ENCODE measurements at regions of chr14 and their contacts with region 1.

Region 1: GRCh38 chr14:104826189-104826860 is 25.4 kb downstream of the ZBTB42 start:
- DNase-seq: peak in 1 of 2 experiments; percentile 100
- H3K4me3 ChIP-seq: peak overlapping the region; percentile 45 to 83 (median 76)
- H3K27ac ChIP-seq: no peak overlapping the region
- H3K4me1 ChIP-seq: peaks cover 0 to 7% (median 5%) of the 10 kb centered on the region in 4 experiments; a peak in 4 of 7 replicates
- H3K27me3 ChIP-seq: peaks cover 0 to 26% (median 19%) of the 10 kb centered on the region in 4 experiments; a peak in 6 of 7 replicates
- CTCF ChIP-seq: peak; percentile 37 to 78 (median 74)
- EP300 ChIP-seq: no peak
- POLR2A ChIP-seq: no peak
- RAD21 ChIP-seq: peak; percentile 53 to 66

Region 2: DNA sequence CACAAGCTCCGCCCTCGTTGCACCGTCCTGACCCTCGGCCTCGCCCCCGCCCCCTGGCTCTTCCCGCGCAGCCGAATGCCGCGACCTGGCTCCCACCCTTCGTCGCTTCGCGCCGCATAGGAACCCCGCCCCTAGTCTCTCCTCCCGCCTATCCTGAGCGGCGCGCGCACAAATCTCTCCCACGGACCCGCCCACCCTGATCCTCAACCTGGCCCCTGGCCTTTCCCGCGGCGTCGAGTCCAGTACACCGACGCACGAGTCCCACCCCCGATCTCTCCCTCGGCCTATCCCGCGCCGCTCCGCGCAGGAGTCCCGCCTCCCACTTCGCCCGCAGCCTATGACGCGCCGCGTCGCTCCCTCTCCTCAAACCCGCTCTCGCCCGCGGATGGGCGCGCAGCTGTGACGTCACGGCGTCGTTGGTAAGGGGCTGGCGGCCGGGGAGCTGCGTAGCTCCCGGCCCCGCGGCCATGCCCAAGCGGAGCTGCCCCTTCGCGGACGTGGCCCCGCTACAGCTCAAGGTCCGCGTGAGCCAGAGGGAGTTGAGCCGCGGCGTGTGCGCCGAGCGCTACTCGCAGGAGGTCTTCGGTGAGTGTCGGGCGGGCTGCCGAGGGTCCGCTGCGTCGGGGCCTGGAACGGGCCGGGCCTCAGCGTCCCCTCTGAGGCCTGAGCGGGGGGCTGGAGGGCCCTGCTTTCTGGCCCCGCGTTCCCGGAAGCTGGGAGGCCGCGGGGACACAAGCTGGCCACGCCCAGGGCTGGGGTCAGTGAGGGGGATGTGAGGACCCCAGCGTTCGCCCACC is 73.4 kb before region 1 on chr14 and contains the start of gene SIVA1:
- CTCF ChIA-PET with region 1: interaction called, 10 read pairs
- POLR2A ChIA-PET with region 1: interaction called, 3 read pairs
- DNase-seq: peak; percentile 95 to 100
- H3K4me3 ChIP-seq: peak within 1 kb of the TSS; percentile 86 to 97 (median 94)
- H3K27ac ChIP-seq: peak within 1 kb of the TSS; percentile 85
- H3K4me1 ChIP-seq: peaks cover 0 to 13% (median 5%) of the 10 kb centered on the region in 4 experiments; a peak in 6 of 7 replicates
- H3K27me3 ChIP-seq: no peaks in the 10 kb centered on the region; a peak in 1 of 7 replicates
- CTCF ChIP-seq: no peak
- EP300 ChIP-seq: no peak
- POLR2A ChIP-seq: peak in 1 of 2 experiments; percentile 91; a peak in 2 of 3 replicates
- RAD21 ChIP-seq: no peak
- total RNA-seq, gene SIVA1: 123 and 135 TPM in 2 replicates

Region 3: GRCh38 chr14:104800015-104800770 is 26.1 kb before region 1 on chr14:
- CTCF ChIA-PET with region 1: interaction called, 15 read pairs
- POLR2A ChIA-PET with region 1: interaction called, 5 read pairs
- DNase-seq: peak; percentile 36 to 85
- H3K4me3 ChIP-seq: peak overlapping the region; percentile 64 to 85 (median 76)
- H3K27ac ChIP-seq: no peak overlapping the region
- H3K4me1 ChIP-seq: peaks cover 0 to 30% (median 26%) of the 10 kb centered on the region in 4 experiments; a peak in 6 of 7 replicates
- H3K27me3 ChIP-seq: peaks cover 20 to 71% (median 58%) of the 10 kb centered on the region in 4 experiments
- CTCF ChIP-seq: no peak
- EP300 ChIP-seq: no peak
- POLR2A ChIP-seq: no peak
- RAD21 ChIP-seq: no peak

Region 4: DNA sequence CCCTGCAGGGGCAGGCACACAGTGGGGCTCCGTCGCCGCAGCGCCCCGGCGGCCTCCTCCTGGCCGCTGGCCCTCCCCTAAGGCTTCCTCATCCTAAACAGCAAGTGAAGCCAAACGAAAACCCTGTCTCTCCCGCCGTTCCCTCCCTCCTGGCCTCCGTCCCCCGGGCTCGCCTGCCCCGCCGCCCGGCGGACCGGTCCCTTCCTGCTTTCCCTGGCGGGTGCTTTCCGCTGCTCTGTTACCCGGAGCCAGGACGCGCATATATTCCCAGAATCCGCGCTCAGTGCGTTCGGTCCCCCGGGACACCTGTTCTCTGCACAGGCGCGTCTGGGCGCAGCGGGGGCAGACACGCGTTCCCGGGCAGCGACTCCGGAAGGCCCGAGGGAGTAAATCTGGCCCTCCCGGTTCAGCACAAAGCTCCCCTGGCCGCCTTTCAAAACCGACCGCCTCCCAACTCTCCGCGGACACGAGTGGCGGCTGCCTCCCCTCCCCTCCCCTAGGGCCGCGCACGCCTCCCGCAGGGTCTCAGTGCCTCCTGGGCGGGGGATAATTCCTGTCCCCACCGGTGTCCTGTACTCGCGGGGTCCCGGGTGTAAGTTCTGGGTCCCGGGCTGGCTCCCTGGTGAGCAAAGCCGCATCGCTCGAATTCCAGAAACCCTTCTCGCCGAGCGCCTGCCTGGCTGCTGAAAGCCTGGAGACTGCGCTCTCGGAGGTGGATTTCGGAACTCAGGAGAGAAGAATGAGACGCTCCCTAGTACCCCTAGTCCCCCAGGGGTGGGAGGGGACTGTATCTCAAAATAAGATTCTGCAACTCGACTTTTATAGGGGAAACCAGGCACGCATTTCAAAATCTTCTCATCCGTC is 17.3 kb after region 1 on chr14:
- CTCF ChIA-PET with region 1: interaction called, 40 read pairs
- POLR2A ChIA-PET with region 1: interaction called, 15 read pairs
- DNase-seq: peak in 1 of 2 experiments; percentile 72
- H3K4me3 ChIP-seq: peak overlapping the region; percentile 38 to 63 (median 52)
- H3K27ac ChIP-seq: no peak overlapping the region
- H3K4me1 ChIP-seq: peaks cover 0 to 18% (median 14%) of the 10 kb centered on the region in 4 experiments; a peak in 6 of 7 replicates
- H3K27me3 ChIP-seq: peaks cover 0 to 18% (median 5%) of the 10 kb centered on the region in 4 experiments; a peak in 5 of 7 replicates
- CTCF ChIP-seq: no peak
- EP300 ChIP-seq: no peak
- POLR2A ChIP-seq: no peak; a peak in 1 of 3 replicates
- RAD21 ChIP-seq: no peak

Region 5: DNA sequence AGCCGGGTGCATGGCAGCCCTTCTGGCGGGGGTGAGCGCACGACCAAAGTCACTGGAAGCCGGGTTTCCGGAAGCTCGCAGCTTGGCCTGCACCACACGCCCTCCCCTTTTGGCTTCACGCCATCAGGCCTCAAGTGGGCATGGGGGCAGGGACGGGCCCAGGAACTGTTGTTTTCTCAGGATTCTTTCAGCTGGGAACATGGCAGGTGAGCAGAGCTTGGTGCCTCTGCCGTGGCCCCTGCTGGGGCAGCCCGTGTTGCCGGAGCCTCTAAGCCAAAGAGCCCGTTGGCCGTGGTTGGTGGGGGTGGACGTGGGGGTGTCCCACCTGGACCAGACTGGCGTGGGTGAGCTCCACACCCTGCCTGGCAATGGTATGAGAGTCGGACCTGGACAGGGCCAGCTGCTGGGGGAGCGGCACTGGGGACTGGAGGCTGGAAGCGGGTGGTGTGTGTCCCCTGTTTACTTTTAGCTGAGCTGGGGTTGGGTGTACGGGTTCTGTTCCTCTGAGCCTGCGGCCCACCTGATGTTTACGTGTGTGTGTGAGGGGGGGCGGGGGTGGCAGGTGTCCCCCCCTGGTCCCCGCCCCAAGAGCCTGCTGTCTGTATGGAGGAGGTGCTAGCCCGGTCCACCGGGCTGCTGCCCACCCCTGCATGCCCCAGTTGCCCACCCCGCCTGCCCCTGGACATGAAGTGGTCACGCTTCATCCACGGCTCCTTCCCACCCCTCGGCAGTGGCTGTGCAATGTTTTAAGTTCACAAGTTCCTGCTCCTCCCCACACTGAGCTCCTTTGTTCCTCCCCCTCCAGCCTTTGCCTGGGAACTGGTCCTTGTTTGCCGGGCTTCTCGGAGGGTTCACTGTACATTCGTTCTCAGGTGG is 69.7 kb after region 1 on chr14:
- CTCF ChIA-PET with region 1: interaction called, 16 read pairs
- POLR2A ChIA-PET with region 1: interaction called, 4 read pairs
- DNase-seq: peak in 1 of 2 experiments; percentile 46
- H3K4me3 ChIP-seq: no peak overlapping the region
- H3K27ac ChIP-seq: no peak overlapping the region
- H3K4me1 ChIP-seq: peaks cover 0 to 3% (median 0%) of the 10 kb centered on the region in 4 experiments; a peak in 1 of 7 replicates
- H3K27me3 ChIP-seq: no peaks in the 10 kb centered on the region
- CTCF ChIP-seq: no peak
- EP300 ChIP-seq: no peak
- POLR2A ChIP-seq: no peak
- RAD21 ChIP-seq: no peak